K562 (cell line): ENCODE measurements at regions of chr17 and their contacts with region 1.

Region 1: GRCh38 chr17:78226749-78227399 is 4.6 kb upstream of the TMEM235 start:
- DNase-seq: no peak
- ATAC-seq: no peak
- H3K4me3 ChIP-seq: no peak overlapping the region
- H3K27ac ChIP-seq: no peak overlapping the region
- H3K4me1 ChIP-seq: peaks cover 0 to 24% of the 10 kb centered on the region in 2 experiments; a peak in 3 of 5 replicates
- H3K27me3 ChIP-seq: no peaks in the 10 kb centered on the region
- CTCF ChIP-seq: 0 out of 6 replicates have a peak, but pooled peaks of 1 of the 3 experiments have one; percentile 1
- EP300 ChIP-seq: no peak
- POLR2A ChIP-seq: 0 out of 2 replicates have a peak, but pooled peaks have one; percentile 3
- RAD21 ChIP-seq: no peak

Region 2: GRCh38 chr17:78214706-78215061 is 12.2 kb before region 1 on chr17:
- CTCF ChIA-PET with region 1: no interaction called
- POLR2A ChIA-PET with region 1: interaction called, 30 read pairs
- in situ Hi-C with region 1: no loop called
- intact Hi-C with region 1: no loop called
- DNase-seq: peak in 1 of 4 experiments; percentile 25
- ATAC-seq: peak; percentile 4; the same call in 2 of the 3 replicates
- H3K4me3 ChIP-seq: peak overlapping the region; percentile 74
- H3K27ac ChIP-seq: peak overlapping the region; percentile 97
- H3K4me1 ChIP-seq: peaks cover 3 to 28% of the 10 kb centered on the region in 2 experiments; a peak in 4 of 5 replicates
- H3K27me3 ChIP-seq: no peaks in the 10 kb centered on the region; a peak in 1 of 5 replicates
- CTCF ChIP-seq: no peak
- EP300 ChIP-seq: no peak
- POLR2A ChIP-seq: no peak
- RAD21 ChIP-seq: no peak

Region 3: GRCh38 chr17:78237401-78238012 is 10.6 kb after region 1 on chr17:
- CTCF ChIA-PET with region 1: no interaction called
- POLR2A ChIA-PET with region 1: interaction called, 14 read pairs
- in situ Hi-C with region 1: no loop called
- intact Hi-C with region 1: no loop called
- DNase-seq: no peak
- ATAC-seq: no peak
- H3K4me3 ChIP-seq: no peak overlapping the region
- H3K27ac ChIP-seq: no peak overlapping the region
- H3K4me1 ChIP-seq: peaks cover 17 to 59% of the 10 kb centered on the region in 2 experiments; a peak in 4 of 5 replicates
- H3K27me3 ChIP-seq: no peaks in the 10 kb centered on the region
- CTCF ChIP-seq: no peak
- EP300 ChIP-seq: no peak
- POLR2A ChIP-seq: no peak
- RAD21 ChIP-seq: no peak